ENCODE measurements at regions of chr6 and their contacts with region 1.

Region 1: DNA sequence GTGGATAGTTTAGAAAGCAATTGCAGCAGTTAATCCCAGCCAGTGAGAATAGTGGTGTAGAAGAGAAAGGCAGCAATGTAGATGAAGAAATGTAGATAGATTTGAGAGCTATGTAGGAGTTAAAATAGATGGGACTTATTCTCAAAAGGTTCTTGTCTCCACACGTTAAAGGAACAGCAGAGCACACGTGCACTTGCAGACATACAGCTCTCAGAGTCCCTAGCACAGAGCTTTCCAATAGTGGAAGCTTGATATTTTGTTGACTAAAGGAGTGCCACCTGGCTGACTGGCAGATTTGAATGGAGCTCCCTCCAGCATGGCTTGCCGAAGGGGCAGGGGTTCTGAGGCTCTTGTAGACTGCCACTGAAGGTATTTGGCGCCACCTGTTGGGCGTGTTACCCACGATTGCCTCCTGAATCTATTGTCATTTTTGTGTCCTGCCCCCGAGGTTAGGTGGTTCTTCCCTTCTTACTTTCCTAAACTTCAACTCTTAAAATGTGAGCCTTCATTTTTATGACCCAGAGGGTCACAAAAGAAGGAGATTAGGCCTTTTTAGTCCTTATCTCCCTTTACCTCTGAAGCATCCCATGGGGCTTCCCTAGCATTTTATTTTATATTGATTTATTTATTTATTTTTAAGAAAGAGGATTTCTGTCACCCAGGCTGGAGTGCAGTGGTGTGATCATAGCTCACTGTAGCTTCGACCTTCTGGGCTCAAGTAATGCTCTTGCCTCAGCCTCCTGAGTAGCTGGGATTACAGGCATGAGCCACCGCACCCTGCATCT is 16.4 kb downstream of the BRD2 start:
- DNase-seq: peak; percentile 63
- H3K4me3 ChIP-seq: no peak overlapping the region
- H3K27ac ChIP-seq: no peak overlapping the region
- H3K27me3 ChIP-seq: peaks cover 3% of the 10 kb centered on the region
- CTCF ChIP-seq: peak; percentile 92

Region 2: GRCh38 chr6:32224696-32225095 is 760.1 kb before region 1 on chr6:
- CTCF ChIA-PET with region 1: no interaction called
- POLR2A ChIA-PET with region 1: no interaction called
- DNase-seq: no peak
- H3K4me3 ChIP-seq: no peak overlapping the region
- H3K27ac ChIP-seq: no peak overlapping the region
- H3K27me3 ChIP-seq: peaks cover 30% of the 10 kb centered on the region
- CTCF ChIP-seq: no peak

Region 3: DNA sequence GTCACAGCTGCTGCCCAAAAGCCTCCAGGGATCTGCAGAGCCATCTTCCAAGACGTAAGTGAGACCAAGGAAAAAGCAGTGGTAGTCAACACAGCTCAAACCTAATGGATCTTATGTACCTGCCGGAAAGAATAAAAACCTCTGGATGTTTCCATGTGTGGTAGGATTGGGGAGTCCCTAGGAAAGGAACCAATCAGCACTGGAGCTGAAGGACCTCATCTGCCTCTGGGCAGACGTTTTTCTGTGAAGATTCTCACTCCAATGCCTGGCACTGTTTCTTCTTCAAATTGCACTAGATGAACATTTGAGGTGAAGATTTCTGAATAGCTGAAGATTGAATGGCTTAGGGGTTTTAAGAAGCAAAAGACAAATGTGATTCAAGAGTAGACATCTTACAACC is 221.4 kb before region 1 on chr6 and contains the start of gene HLA-DQB2:
- CTCF ChIA-PET with region 1: no interaction called
- POLR2A ChIA-PET with region 1: no interaction called
- DNase-seq: no peak
- H3K4me3 ChIP-seq: no peak within 1 kb of the TSS
- H3K27ac ChIP-seq: no peak within 1 kb of the TSS
- H3K27me3 ChIP-seq: peaks cover 8% of the 10 kb centered on the region
- CTCF ChIP-seq: no peak
- polyA plus RNA-seq, gene HLA-DQB2: not detected in 2 replicates

Region 4: DNA sequence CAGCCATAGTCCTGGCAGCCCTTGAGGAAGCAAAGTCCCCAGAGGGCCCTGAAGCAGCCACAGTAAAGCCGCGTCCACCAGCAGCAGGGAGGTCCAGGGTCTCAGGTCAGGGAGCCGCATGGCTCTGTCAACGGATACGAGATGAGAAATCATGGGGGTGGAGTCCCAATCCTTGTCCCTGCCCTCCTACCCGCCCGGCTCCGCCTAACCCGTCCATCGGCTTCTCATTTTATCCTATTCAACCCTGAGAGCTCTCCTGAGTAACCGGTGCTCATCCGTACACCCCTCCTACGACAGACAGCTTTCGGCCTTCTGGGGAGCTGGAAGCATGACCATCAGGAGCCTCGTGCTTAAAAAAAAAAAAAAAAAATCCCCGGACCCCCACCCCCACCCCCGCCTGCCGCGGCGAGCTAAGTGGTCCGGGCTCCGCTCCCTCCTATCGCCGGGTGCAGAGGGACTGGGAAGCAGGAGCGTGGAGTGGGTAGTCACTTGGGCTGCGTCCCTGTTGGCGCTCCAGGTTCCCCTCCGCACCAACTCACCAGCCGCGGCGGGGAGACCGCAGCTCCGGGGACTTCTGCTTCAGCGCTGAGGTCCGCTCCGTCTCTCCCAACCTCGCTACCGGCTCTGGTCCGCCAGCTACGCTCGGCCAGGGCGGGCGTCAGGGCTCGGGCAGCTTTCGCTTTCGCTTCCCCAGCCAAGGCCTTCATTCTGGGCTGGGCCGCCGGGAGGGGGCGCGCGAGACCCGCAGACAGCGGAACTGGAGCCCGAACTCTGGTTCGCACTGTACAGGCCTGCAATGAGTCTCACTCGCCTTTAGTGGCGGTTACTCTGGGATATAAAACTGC is 146.5 kb before region 1 on chr6 and contains the start of gene TAP2:
- CTCF ChIA-PET with region 1: interaction called, 45 read pairs
- POLR2A ChIA-PET with region 1: no interaction called
- DNase-seq: peak; percentile 74
- H3K4me3 ChIP-seq: peak within 1 kb of the TSS; percentile 92
- H3K27ac ChIP-seq: peak within 1 kb of the TSS; percentile 92
- H3K27me3 ChIP-seq: no peaks in the 10 kb centered on the region
- CTCF ChIP-seq: peak; percentile 96
- polyA plus RNA-seq, gene TAP2: 15.3 and 15.4 TPM in 2 replicates

Region 5: DNA sequence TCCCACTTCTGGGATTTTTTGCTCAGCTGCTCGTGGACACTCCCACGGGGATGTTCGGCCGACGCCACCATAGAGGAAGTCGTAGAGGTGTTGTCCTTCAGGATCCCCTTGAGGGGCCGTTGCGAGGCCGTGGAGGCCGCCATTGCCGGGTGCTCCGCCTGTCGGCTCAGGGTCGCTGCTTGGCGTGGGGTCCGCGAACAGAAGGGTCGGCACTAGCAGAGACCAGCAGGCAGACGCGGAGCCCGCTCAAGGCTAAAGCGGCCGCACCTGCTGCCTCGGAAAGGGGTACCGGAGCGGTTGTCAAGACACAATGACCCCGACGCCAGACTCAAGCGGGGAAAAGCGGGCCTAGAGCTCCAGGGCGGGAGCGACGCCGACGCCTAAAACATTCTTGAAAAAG is 105.1 kb before region 1 on chr6:
- CTCF ChIA-PET with region 1: interaction called, 147 read pairs
- POLR2A ChIA-PET with region 1: no interaction called
- DNase-seq: no peak
- H3K4me3 ChIP-seq: no peak overlapping the region
- H3K27ac ChIP-seq: no peak overlapping the region
- H3K27me3 ChIP-seq: peaks cover 27% of the 10 kb centered on the region
- CTCF ChIP-seq: no peak

Region 6: GRCh38 chr6:32894080-32895005 is 90.5 kb before region 1 on chr6:
- CTCF ChIA-PET with region 1: interaction called, 11 read pairs
- POLR2A ChIA-PET with region 1: interaction called, 3 read pairs
- DNase-seq: peak; percentile 77
- H3K4me3 ChIP-seq: peak overlapping the region; percentile 77
- H3K27ac ChIP-seq: peak overlapping the region; percentile 66
- H3K27me3 ChIP-seq: no peaks in the 10 kb centered on the region
- CTCF ChIP-seq: no peak

Region 7: GRCh38 chr6:32947552-32948465 is 37.0 kb before region 1 on chr6:
- CTCF ChIA-PET with region 1: interaction called, 33 read pairs
- POLR2A ChIA-PET with region 1: no interaction called
- DNase-seq: no peak
- H3K4me3 ChIP-seq: no peak overlapping the region
- H3K27ac ChIP-seq: no peak overlapping the region
- H3K27me3 ChIP-seq: no peaks in the 10 kb centered on the region
- CTCF ChIP-seq: peak; percentile 56

Region 8: GRCh38 chr6:32964776-32965175 is 20.0 kb before region 1 on chr6:
- CTCF ChIA-PET with region 1: interaction called, 35 read pairs
- POLR2A ChIA-PET with region 1: interaction called, 199 read pairs
- DNase-seq: no peak
- H3K4me3 ChIP-seq: no peak overlapping the region
- H3K27ac ChIP-seq: no peak overlapping the region
- H3K27me3 ChIP-seq: no peaks in the 10 kb centered on the region
- CTCF ChIP-seq: no peak